Aorta (tissue), 5 donors: ENCODE measurements at regions of chr4 and their contacts with region 1.

Region 1: GRCh38 chr4:70901984-70902576 is at the start of gene MOB1B:
- DNase-seq: peak; percentile 93 to 96
- ATAC-seq: peak; percentile 96
- H3K4me3 ChIP-seq: peak within 1 kb of the TSS; percentile 77 to 92
- H3K27ac ChIP-seq: peak within 1 kb of the TSS in 1 of 2 donors; percentile 73
- H3K4me1 ChIP-seq: no peaks in the 10 kb centered on the region
- H3K27me3 ChIP-seq: no peaks in the 10 kb centered on the region
- total RNA-seq, gene MOB1B: 26.5 to 29.8 TPM

Region 2: DNA sequence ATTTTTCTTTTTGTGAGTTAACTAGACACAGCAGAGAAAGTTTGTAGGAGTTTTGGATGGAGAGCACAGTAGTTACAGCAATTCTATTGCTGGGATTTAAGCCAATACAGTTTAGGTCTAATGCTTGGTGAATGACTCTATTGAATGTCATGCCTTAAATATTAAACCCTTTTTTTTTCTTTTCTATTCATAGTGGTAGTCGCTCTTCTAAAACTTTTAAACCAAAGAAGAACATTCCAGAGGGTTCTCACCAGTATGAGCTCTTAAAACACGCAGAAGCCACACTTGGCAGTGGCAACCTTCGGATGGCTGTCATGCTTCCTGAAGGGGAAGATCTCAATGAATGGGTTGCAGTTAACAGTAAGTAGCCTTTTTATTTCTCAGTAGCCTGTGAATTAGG is 56.6 kb after region 1 on chr4:
- intact Hi-C with region 1: loop called in 1 of 2 experiments (anchors 10 kb)
- DNase-seq: no peak
- ATAC-seq: no peak
- H3K4me3 ChIP-seq: no peak overlapping the region
- H3K27ac ChIP-seq: peak overlapping the region in 1 of 2 donors; percentile 35
- H3K4me1 ChIP-seq: no peaks in the 10 kb centered on the region
- H3K27me3 ChIP-seq: no peaks in the 10 kb centered on the region

Region 3: GRCh38 chr4:70993181-70994068 is 91.3 kb after region 1 on chr4 and contains the start of gene DCK:
- intact Hi-C with region 1: loop called (anchors 5 kb)
- DNase-seq: peak; percentile 94 to 97
- ATAC-seq: peak; percentile 99
- H3K4me3 ChIP-seq: peak within 1 kb of the TSS; percentile 42 to 62
- H3K27ac ChIP-seq: peak within 1 kb of the TSS in 1 of 2 donors; percentile 60
- H3K4me1 ChIP-seq: peaks cover 0 to 3% of the 10 kb centered on the region in 2 donors
- H3K27me3 ChIP-seq: no peaks in the 10 kb centered on the region
- total RNA-seq, gene DCK: 10.7 to 11.2 TPM